ENCODE measurements at regions of chr1 and their contacts with region 1.

Region 1: GRCh38 chr1:2381741-2382620 is 9.4 kb downstream of the MORN1 start:
- DNase-seq: peak; percentile 85 to 93 (median 88)
- ATAC-seq: peak; percentile 92 to 97 (median 95)
- H3K4me3 ChIP-seq: no peak overlapping the region
- H3K27ac ChIP-seq: peak overlapping the region in 1 of 12 donors; percentile 40
- H3K4me1 ChIP-seq: peaks cover 0 to 15% (median 8%) of the 10 kb centered on the region in 12 donors
- H3K27me3 ChIP-seq: no peaks in the 10 kb centered on the region
- CTCF ChIP-seq: peak; percentile 90 to 96 (median 94)
- POLR2A ChIP-seq: no peak

Region 2: GRCh38 chr1:2194898-2195673 is 186.9 kb before region 1 on chr1:
- intact Hi-C with region 1: loop called (anchors 1 to 2 kb)
- DNase-seq: peak; percentile 92 to 95 (median 94)
- ATAC-seq: peak; percentile 62 to 79 (median 76)
- H3K4me3 ChIP-seq: peak overlapping the region; percentile 51 to 88 (median 73)
- H3K27ac ChIP-seq: peak overlapping the region; percentile 82 to 98 (median 95)
- H3K4me1 ChIP-seq: peaks cover 6 to 67% (median 54%) of the 10 kb centered on the region in 12 donors
- H3K27me3 ChIP-seq: no peaks in the 10 kb centered on the region
- CTCF ChIP-seq: peak; percentile 85 to 98 (median 96)
- POLR2A ChIP-seq: peak in 1 of 2 donors; percentile 31

Region 3: GRCh38 chr1:2322065-2322571 is 59.9 kb before region 1 on chr1:
- intact Hi-C with region 1: loop called in 6 of 10 experiments (anchors 5 kb)
- DNase-seq: peak; percentile 74 to 87 (median 83)
- ATAC-seq: peak; percentile 62 to 86 (median 74)
- H3K4me3 ChIP-seq: peak overlapping the region in 7 of 12 donors; percentile 4 to 42 (median 15)
- H3K27ac ChIP-seq: peak overlapping the region; percentile 8 to 88 (median 66)
- H3K4me1 ChIP-seq: peaks cover 0 to 59% (median 23%) of the 10 kb centered on the region in 12 donors
- H3K27me3 ChIP-seq: peaks cover 0 to 8% (median 0%) of the 10 kb centered on the region in 9 donors
- CTCF ChIP-seq: peak in 2 of 12 donors; percentile 22 to 24
- POLR2A ChIP-seq: no peak

Region 4: GRCh38 chr1:2330511-2331199 is 51.3 kb before region 1 on chr1:
- intact Hi-C with region 1: loop called in 1 of 10 experiments (anchors 5 kb)
- DNase-seq: peak in 3 of 5 donors; percentile 56 to 70 (median 64)
- ATAC-seq: peak; percentile 42 to 75 (median 62)
- H3K4me3 ChIP-seq: no peak overlapping the region
- H3K27ac ChIP-seq: peak overlapping the region in 5 of 12 donors; percentile 30 to 70 (median 49)
- H3K4me1 ChIP-seq: peaks cover 0 to 19% (median 11%) of the 10 kb centered on the region in 12 donors
- H3K27me3 ChIP-seq: no peaks in the 10 kb centered on the region
- CTCF ChIP-seq: peak in 3 of 12 donors; percentile 4 to 9 (median 9)
- POLR2A ChIP-seq: no peak